Lower leg skin (tissue), 4 donors: ENCODE measurements at regions of chr1 and their contacts with region 1.

Region 1: DNA sequence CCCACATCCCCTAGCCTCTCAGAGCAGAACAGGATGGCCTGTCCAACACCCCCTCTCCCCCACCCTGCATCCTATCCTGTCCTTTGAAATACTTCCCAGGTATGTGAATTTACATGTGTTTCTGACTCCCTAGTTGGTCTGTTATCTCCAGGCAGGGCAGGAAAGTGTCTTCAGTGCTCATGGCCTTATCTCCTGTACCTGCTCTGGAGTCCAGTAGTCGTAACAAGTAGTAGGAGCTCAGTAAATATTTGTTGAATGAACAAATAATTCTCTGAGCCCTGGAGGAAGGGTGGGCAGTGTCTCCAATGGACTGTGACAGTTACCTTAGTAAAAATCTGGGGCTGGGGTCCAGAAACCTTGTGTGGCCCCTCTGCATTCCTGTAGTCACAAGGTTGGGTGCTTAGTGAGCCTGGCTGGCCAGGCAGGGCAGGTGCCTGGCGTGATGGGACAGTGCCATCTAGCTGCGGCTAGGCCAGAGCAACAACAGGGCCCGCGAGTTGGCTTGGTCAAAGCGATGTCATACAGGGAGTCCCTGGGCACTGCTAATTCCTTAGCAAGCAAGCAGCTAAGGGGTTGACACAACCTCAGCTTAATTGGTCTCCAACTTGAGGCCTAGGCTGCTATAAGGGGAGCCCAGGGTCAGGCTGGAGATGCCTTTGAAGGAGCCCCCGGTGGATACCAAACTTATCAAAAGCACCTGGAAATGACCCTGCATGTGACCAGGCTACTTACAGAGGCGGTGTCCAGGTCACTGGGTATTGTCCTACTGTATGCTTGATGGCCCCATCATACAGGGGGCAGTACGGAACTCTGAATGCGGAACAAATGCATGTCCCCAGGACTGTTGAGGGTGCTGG is 89.0 kb upstream of the PPM1J start:
- DNase-seq: peak; percentile 29 to 87
- H3K4me3 ChIP-seq: no peak overlapping the region
- CTCF ChIP-seq: no peak
- POLR2A ChIP-seq: no peak

Region 2: GRCh38 chr1:112718691-112719276 is 85.3 kb before region 1 on chr1:
- intact Hi-C with region 1: loop called (anchors 2 kb)
- DNase-seq: peak in 1 of 2 donors; percentile 95
- H3K4me3 ChIP-seq: no peak overlapping the region
- CTCF ChIP-seq: no peak
- POLR2A ChIP-seq: no peak

Region 3: DNA sequence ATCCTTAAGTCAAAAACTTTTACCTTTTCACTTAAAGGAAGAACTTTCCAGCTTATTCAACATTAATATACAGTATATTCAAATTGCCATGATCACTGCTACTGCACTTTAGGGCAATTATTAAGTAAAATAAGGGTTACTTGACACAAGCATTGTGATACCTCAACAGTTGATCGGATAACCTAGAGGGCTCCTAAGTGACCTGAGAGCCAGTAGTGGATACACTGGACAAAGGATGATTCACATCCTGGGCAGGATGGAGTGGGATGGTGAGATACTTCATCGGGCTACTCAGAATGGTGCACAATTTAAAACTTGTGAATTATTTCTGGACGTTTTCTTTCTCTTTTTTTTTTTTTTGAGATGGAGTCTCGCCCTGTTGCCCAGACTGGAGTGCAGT is 34.5 kb before region 1 on chr1:
- intact Hi-C with region 1: no loop called
- DNase-seq: no peak
- H3K4me3 ChIP-seq: no peak overlapping the region
- CTCF ChIP-seq: no peak
- POLR2A ChIP-seq: no peak